CD8-positive, alpha-beta T cell (primary cell): ENCODE measurements at regions of chr10 and their contacts with region 1.

Region 1: DNA sequence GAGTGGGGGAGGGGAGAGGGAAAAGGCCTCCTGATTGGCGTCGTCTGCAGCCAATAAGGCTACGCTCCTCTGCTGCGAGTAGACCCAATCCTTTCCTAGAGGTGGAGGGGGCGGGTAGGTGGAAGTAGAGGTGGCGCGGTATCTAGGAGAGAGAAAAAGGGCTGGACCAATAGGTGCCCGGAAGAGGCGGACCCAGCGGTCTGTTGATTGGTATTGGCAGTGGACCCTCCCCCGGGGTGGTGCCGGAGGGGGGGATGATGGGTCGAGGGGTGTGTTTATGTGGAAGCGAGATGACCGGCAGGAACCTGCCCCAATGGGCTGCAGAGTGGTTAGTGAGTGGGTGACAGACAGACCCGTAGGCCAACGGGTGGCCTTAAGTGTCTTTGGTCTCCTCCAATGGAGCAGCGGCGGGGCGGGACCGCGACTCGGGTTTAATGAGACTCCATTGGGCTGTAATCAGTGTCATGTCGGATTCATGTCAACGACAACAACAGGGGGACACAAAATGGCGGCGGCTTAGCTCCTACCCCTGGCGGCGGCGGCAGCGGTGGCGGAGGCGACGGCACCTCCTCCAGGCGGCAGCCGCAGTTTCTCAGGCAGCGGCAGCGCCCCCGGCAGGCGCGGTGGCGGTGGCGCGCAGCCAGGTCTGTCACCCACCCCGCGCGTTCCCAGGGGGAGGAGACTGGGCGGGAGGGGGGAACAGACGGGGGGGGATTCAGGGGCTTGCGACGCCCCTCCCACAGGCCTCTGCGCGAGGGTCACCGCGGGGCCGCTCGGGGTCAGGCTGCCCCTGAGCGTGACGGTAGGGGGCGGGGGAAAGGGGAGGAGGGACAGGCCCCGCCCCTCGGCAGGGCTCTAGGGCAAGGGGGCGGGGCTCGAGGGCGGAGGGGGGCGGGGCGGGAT is at the start of gene KAT6B:
- DNase-seq: peak; percentile 99 to 100 (median 100)
- ATAC-seq: peak; percentile 76
- H3K4me3 ChIP-seq: peak within 1 kb of the TSS; percentile 84 to 95
- H3K4me3 Mint-ChIP-seq: peak within 1 kb of the TSS; percentile 92
- H3K27ac ChIP-seq: peak within 1 kb of the TSS; percentile 84 to 89
- H3K27ac Mint-ChIP-seq: peak within 1 kb of the TSS; percentile 97
- H3K4me1 ChIP-seq: peaks cover 40% of the 10 kb centered on the region
- H3K4me1 Mint-ChIP-seq: peaks cover 69% of the 10 kb centered on the region
- H3K27me3 ChIP-seq: no peaks in the 10 kb centered on the region
- H3K27me3 Mint-ChIP-seq: no peaks in the 10 kb centered on the region
- CTCF ChIP-seq: no peak
- total RNA-seq, gene KAT6B: 73.0 to 74.7 TPM

Region 2: DNA sequence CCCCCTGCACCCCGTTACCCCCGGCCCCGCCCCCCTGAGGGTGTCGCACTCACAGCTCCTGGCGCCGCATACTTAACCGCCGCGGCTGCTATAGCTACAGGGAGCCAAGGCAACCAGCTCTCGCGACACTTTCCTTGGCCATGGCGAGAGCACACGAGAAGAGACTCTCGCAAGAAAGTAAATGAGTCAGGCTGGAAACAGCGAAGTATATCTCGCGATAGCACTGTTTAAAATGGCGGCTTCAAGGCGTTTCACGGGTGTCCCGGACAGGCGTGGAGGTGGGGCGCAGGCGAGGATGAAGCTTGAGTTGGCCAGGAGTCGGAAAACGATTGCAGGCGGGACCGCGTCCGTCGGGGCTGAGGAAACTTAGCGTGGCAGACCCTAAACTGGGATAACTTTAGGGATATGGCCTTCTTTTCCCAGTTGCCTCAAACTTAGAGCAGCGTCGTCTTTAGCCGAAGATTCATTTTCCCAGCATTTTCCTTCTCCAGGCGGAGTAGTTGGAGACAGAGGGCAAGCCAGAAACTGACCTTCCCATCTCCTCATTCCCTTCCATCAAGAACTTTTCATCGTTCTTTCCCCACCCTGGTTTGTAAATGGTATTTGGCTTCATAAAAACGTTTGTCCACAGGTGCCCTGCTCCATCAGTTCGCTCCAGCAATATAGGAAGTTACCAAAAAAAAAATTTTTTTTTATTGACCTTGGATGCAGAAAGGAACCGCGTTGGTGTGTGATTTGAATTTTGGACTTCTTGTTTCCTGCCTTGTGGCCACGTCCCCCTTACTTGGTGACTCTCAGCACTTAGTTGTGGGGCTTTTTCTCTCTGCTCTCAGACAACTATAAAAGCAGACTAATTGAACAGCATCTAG is 1200.3 kb before region 1 on chr10:
- CTCF ChIA-PET with region 1: no interaction called
- POLR2A ChIA-PET with region 1: no interaction called
- intact Hi-C with region 1: loop called in 1 of 2 experiments (anchors 5 kb)
- DNase-seq: peak; percentile 84 to 99 (median 92)
- ATAC-seq: peak; percentile 90
- H3K4me3 ChIP-seq: peak overlapping the region; percentile 78 to 90
- H3K4me3 Mint-ChIP-seq: peak overlapping the region; percentile 95
- H3K27ac ChIP-seq: peak overlapping the region; percentile 84 to 86
- H3K27ac Mint-ChIP-seq: peak overlapping the region; percentile 98
- H3K4me1 ChIP-seq: peaks cover 16% of the 10 kb centered on the region
- H3K4me1 Mint-ChIP-seq: peaks cover 21% of the 10 kb centered on the region
- H3K27me3 ChIP-seq: no peaks in the 10 kb centered on the region
- H3K27me3 Mint-ChIP-seq: no peaks in the 10 kb centered on the region
- CTCF ChIP-seq: no peak

Region 3: GRCh38 chr10:73997787-73998622 is 828.4 kb before region 1 on chr10 and contains the start of gene VCL:
- CTCF ChIA-PET with region 1: no interaction called
- POLR2A ChIA-PET with region 1: no interaction called
- intact Hi-C with region 1: loop called in 1 of 2 experiments (anchors 2 kb)
- DNase-seq: peak; percentile 91 to 97 (median 95)
- ATAC-seq: peak; percentile 96
- H3K4me3 ChIP-seq: peak within 1 kb of the TSS; percentile 82
- H3K4me3 Mint-ChIP-seq: peak within 1 kb of the TSS; percentile 100
- H3K27ac ChIP-seq: peak within 1 kb of the TSS; percentile 63
- H3K27ac Mint-ChIP-seq: peak within 1 kb of the TSS; percentile 96
- H3K4me1 ChIP-seq: peaks cover 32% of the 10 kb centered on the region
- H3K4me1 Mint-ChIP-seq: peaks cover 45% of the 10 kb centered on the region
- H3K27me3 ChIP-seq: no peaks in the 10 kb centered on the region
- H3K27me3 Mint-ChIP-seq: no peaks in the 10 kb centered on the region
- CTCF ChIP-seq: no peak
- total RNA-seq, gene VCL: 6.6 to 9.4 TPM

Region 4: DNA sequence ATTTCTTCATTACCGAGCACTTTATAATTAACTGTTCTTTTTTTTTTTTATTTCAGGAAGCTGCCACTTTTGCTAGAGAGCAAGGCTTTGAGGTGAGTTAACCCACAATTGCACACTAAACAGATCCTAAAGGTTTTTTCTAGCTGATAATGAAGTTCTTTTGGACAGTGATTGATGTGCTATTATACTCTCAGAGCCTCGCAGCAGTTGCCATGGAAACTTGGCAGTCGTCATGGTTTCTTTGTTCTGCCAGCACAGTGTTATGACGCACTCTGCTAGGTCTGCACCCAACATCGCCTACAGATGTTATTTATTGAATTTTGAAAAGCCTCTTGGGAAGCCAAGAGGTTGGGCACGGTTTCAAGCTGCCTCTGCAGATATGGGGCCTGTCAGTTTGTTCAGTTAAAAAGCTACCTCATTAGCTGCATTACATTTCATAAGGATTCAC is 237.1 kb before region 1 on chr10:
- CTCF ChIA-PET with region 1: no interaction called
- POLR2A ChIA-PET with region 1: interaction called, 9 read pairs
- intact Hi-C with region 1: loop called (anchors 1 to 2 kb)
- DNase-seq: peak; percentile 70 to 97 (median 86)
- ATAC-seq: peak; percentile 76
- H3K4me3 ChIP-seq: no peak overlapping the region
- H3K4me3 Mint-ChIP-seq: peak overlapping the region; percentile 49
- H3K27ac ChIP-seq: peak overlapping the region; percentile 36 to 61
- H3K27ac Mint-ChIP-seq: peak overlapping the region; percentile 87
- H3K4me1 ChIP-seq: peaks cover 48% of the 10 kb centered on the region
- H3K4me1 Mint-ChIP-seq: peaks cover 61% of the 10 kb centered on the region
- H3K27me3 ChIP-seq: no peaks in the 10 kb centered on the region
- H3K27me3 Mint-ChIP-seq: no peaks in the 10 kb centered on the region
- CTCF ChIP-seq: no peak

Region 5: GRCh38 chr10:74786088-74786487 is 40.3 kb before region 1 on chr10:
- CTCF ChIA-PET with region 1: no interaction called
- POLR2A ChIA-PET with region 1: no interaction called
- intact Hi-C with region 1: loop called in 1 of 2 experiments (anchors 5 kb)
- DNase-seq: no peak
- ATAC-seq: no peak
- H3K4me3 ChIP-seq: no peak overlapping the region
- H3K4me3 Mint-ChIP-seq: no peak overlapping the region
- H3K27ac ChIP-seq: no peak overlapping the region
- H3K27ac Mint-ChIP-seq: no peak overlapping the region
- H3K4me1 ChIP-seq: no peaks in the 10 kb centered on the region
- H3K4me1 Mint-ChIP-seq: no peaks in the 10 kb centered on the region
- H3K27me3 ChIP-seq: no peaks in the 10 kb centered on the region
- H3K27me3 Mint-ChIP-seq: no peaks in the 10 kb centered on the region
- CTCF ChIP-seq: no peak

Region 6: DNA sequence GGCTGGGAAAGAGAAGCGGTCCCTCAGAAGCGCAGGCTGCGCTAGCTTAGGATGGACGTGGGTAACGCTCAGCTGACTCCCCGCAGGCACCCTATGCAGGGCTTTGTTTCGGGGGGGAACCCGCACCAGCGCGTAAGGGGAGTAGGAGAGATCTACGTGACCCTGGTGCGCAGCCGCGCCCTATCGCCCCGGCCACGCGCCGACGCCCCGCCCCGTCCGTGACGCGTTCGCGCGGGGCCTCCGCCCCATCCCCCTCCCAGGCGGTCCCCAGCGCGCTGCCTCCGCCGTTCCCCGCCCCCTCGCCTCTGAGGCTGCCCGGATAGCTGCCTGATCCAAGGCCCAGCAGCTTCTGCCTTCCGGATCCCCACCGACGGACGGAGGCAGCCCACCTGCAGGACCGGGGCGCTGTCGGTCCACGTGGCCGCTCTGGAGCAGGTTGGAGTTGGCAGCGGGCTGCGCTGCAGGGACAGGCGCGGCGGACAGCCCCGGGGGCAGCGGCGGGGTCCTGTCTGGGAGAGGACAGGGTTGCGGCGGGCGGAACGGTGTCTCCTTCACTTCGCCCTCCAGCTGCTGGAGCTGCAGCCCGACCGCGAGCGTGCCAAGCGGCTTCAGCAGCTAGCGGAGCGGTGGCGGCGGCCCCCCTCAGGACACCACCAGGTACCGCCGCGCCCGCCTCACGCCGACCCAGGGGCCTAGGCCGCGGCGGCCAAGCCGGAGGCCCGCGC is 384.1 kb after region 1 on chr10 and contains the start of gene VDAC2:
- CTCF ChIA-PET with region 1: no interaction called
- POLR2A ChIA-PET with region 1: no interaction called
- intact Hi-C with region 1: loop called in 1 of 2 experiments (anchors 1 kb)
- DNase-seq: peak; percentile 93 to 99 (median 96)
- ATAC-seq: peak; percentile 89
- H3K4me3 ChIP-seq: peak within 1 kb of the TSS; percentile 90 to 93
- H3K4me3 Mint-ChIP-seq: peak within 1 kb of the TSS; percentile 97
- H3K27ac ChIP-seq: peak within 1 kb of the TSS; percentile 99 to 100
- H3K27ac Mint-ChIP-seq: peak within 1 kb of the TSS; percentile 100
- H3K4me1 ChIP-seq: peaks cover 28% of the 10 kb centered on the region
- H3K4me1 Mint-ChIP-seq: peaks cover 26% of the 10 kb centered on the region
- H3K27me3 ChIP-seq: no peaks in the 10 kb centered on the region
- H3K27me3 Mint-ChIP-seq: no peaks in the 10 kb centered on the region
- CTCF ChIP-seq: no peak
- total RNA-seq, gene VDAC2: 184 to 187 TPM